ENCODE measurements at regions of chr1 and their contacts with region 1.

Region 1: GRCh38 chr1:92960395-92961130 is 699 bp downstream of the DIPK1A start:
- H3K4me3 Mint-ChIP-seq: peak overlapping the region; percentile 86
- H3K27ac Mint-ChIP-seq: no peak overlapping the region
- H3K4me1 Mint-ChIP-seq: peaks cover 40% of the 10 kb centered on the region
- H3K27me3 Mint-ChIP-seq: no peaks in the 10 kb centered on the region

Region 2: DNA sequence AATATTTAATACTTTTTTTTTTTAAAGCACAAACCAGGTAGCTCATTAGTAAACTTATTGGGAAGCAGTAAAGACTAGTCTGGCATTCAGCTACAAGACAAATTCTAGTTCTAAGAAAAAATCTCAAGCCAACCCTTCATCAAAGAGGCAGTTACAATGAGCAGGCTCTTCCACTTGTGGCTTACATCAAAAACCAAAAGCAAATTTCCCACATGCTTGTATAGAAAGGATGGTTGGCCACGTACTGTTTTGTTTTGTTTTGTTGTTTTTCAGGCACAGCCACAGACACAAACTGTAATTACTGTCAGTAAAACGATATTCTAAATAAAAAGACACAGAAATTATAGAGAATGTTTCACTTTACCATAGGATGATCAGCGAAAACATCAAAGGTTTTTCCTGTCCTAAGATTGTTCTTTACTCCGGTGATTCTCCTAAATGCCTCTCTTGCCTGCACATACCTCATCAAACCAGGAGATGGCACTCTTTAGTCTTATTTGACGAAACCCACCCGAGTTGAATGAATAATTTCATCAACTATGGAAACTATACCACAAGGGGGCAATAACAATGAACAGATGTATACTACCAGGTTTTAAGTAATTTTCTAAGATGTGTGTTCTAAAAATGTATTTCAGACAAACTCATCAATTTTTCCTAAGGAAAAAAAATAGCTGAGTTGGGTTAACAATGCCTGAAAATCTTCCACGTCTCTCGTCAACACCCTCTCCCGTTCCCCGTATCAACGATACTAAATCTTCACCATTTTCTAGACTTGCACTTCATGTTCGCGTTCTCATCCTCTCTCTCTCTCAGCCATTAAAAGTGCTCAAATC is 101.8 kb before region 1 on chr1:
- intact Hi-C with region 1: loop called (anchors 1 kb)
- H3K4me3 Mint-ChIP-seq: no peak overlapping the region
- H3K27ac Mint-ChIP-seq: peak overlapping the region; percentile 3
- H3K4me1 Mint-ChIP-seq: peaks cover 15% of the 10 kb centered on the region
- H3K27me3 Mint-ChIP-seq: no peaks in the 10 kb centered on the region

Region 3: GRCh38 chr1:92934395-92935378 is 25.9 kb before region 1 on chr1:
- intact Hi-C with region 1: no loop called
- H3K4me3 Mint-ChIP-seq: no peak overlapping the region
- H3K27ac Mint-ChIP-seq: no peak overlapping the region
- H3K4me1 Mint-ChIP-seq: peaks cover 29% of the 10 kb centered on the region
- H3K27me3 Mint-ChIP-seq: no peaks in the 10 kb centered on the region